HepG2 (cell line): ENCODE measurements at regions of chr12 and their contacts with region 1.

Region 1: GRCh38 chr12:46815809-46816208 is 10.0 kb downstream of the SLC38A4 start:
- DNase-seq: no peak
- ATAC-seq: no peak
- H3K4me3 ChIP-seq: no peak overlapping the region
- H3K27ac ChIP-seq: no peak overlapping the region
- H3K4me1 ChIP-seq: peaks cover 47% of the 10 kb centered on the region
- H3K27me3 ChIP-seq: no peaks in the 10 kb centered on the region
- CTCF ChIP-seq: no peak
- EP300 ChIP-seq: no peak
- POLR2A ChIP-seq: no peak
- RAD21 ChIP-seq: no peak

Region 2: GRCh38 chr12:46800160-46800559 is 15.6 kb before region 1 on chr12:
- CTCF ChIA-PET with region 1: no interaction called
- POLR2A ChIA-PET with region 1: interaction called, 3 read pairs
- in situ Hi-C with region 1: no loop called
- intact Hi-C with region 1: loop called (anchors 2 kb)
- DNase-seq: no peak
- ATAC-seq: no peak; the same call in 2 of the 3 replicates
- H3K4me3 ChIP-seq: no peak overlapping the region
- H3K27ac ChIP-seq: peak overlapping the region; percentile 31
- H3K4me1 ChIP-seq: peaks cover 58% of the 10 kb centered on the region
- H3K27me3 ChIP-seq: no peaks in the 10 kb centered on the region; a peak in 1 of 5 replicates
- CTCF ChIP-seq: no peak
- EP300 ChIP-seq: no peak
- POLR2A ChIP-seq: no peak
- RAD21 ChIP-seq: no peak

Region 3: GRCh38 chr12:47066278-47067025 is 250.6 kb after region 1 on chr12:
- CTCF ChIA-PET with region 1: no interaction called
- POLR2A ChIA-PET with region 1: no interaction called
- in situ Hi-C with region 1: no loop called
- intact Hi-C with region 1: no loop called
- DNase-seq: no peak
- ATAC-seq: no peak
- H3K4me3 ChIP-seq: no peak overlapping the region
- H3K27ac ChIP-seq: no peak overlapping the region
- H3K4me1 ChIP-seq: no peaks in the 10 kb centered on the region
- H3K27me3 ChIP-seq: no peaks in the 10 kb centered on the region
- CTCF ChIP-seq: no peak
- EP300 ChIP-seq: no peak
- POLR2A ChIP-seq: no peak
- RAD21 ChIP-seq: no peak